CD4-positive, alpha-beta T cell (primary cell): ENCODE measurements at regions of chr20 and their contacts with region 1.

Region 1: DNA sequence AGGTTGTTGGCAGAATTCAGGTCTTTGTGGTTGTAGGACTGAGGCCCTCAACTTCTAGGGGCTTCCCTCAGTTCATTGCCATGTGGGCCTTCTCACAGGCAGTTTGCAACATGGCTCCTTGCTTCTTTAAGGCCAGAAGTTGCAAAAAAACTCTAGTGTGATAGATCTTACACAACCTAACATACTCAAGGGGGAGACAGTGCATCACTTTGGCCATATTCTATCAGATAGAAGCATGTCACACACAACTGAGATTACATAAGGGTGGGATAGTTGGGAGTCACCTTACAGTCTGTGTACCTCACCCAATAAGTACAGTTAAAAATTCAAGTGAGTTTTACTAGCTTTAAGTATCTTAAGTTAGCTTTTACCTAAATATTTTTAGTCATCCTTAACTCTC is 1.6 kb downstream of the SIRPD start:
- DNase-seq: peak in 4 of 14 experiments; percentile 12 to 62 (median 48)
- ATAC-seq: peak; percentile 58
- H3K4me3 ChIP-seq: no peak overlapping the region
- H3K4me3 Mint-ChIP-seq: no peak overlapping the region
- H3K27ac ChIP-seq: no peak overlapping the region
- H3K27ac Mint-ChIP-seq: no peak overlapping the region
- H3K4me1 ChIP-seq: no peaks in the 10 kb centered on the region
- H3K4me1 Mint-ChIP-seq: peaks cover 8% of the 10 kb centered on the region
- H3K27me3 ChIP-seq: no peaks in the 10 kb centered on the region
- H3K27me3 Mint-ChIP-seq: no peaks in the 10 kb centered on the region
- CTCF ChIP-seq: peak; percentile 48

Region 2: GRCh38 chr20:1631309-1632151 is 75.6 kb after region 1 on chr20:
- CTCF ChIA-PET with region 1: no interaction called
- POLR2A ChIA-PET with region 1: interaction called, 3 read pairs
- intact Hi-C with region 1: loop called in 1 of 2 experiments (anchors 5 kb)
- DNase-seq: no peak
- ATAC-seq: no peak
- H3K4me3 ChIP-seq: no peak overlapping the region
- H3K4me3 Mint-ChIP-seq: peak overlapping the region; percentile 66
- H3K27ac ChIP-seq: peak overlapping the region; percentile 31 to 68
- H3K27ac Mint-ChIP-seq: peak overlapping the region; percentile 92
- H3K4me1 ChIP-seq: peaks cover 39% of the 10 kb centered on the region
- H3K4me1 Mint-ChIP-seq: peaks cover 60% of the 10 kb centered on the region
- H3K27me3 ChIP-seq: no peaks in the 10 kb centered on the region
- H3K27me3 Mint-ChIP-seq: no peaks in the 10 kb centered on the region
- CTCF ChIP-seq: no peak